Right ventricle myocardium inferior (tissue), 1 donor: ENCODE measurements at regions of chr5 and their contacts with region 1.

Region 1: DNA sequence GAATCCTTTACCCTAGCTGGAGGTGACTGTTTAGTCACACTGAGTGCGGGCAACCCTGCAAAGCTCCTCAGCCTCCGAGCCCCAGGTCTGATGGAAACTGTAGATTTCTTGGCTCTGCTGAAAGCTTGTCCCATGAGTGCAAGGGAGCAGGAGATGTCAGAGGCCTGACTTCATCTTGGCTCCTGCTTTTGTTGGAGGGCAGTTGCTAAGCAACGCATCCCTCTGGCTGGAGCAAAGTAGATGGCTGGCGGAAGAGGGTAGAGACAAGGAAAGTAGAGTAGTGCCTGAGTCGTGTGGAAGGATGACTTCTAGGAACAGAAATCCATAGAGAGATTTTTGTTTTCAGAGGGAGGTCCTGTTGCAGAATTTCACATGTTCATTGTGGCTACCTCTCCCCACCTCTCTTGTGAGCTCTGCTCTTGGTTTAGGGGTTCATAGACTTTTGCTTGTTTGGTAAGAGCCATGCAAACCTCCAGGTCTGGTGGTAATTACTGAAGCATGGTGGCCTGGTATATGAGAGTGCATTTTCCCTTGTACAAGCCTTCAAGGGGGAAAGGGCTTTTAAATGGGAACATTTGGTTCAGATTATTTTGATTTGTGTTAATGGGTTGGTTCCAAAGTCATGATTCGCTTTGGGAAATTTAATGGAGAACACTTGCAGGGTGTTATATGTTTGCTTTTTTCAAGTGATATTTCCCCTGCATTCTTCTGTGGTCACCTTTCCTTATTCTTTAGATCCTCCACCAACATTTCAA is 71.5 kb downstream of the ARHGAP26 start:
- DNase-seq: no peak
- ATAC-seq: peak; percentile 76

Region 2: DNA sequence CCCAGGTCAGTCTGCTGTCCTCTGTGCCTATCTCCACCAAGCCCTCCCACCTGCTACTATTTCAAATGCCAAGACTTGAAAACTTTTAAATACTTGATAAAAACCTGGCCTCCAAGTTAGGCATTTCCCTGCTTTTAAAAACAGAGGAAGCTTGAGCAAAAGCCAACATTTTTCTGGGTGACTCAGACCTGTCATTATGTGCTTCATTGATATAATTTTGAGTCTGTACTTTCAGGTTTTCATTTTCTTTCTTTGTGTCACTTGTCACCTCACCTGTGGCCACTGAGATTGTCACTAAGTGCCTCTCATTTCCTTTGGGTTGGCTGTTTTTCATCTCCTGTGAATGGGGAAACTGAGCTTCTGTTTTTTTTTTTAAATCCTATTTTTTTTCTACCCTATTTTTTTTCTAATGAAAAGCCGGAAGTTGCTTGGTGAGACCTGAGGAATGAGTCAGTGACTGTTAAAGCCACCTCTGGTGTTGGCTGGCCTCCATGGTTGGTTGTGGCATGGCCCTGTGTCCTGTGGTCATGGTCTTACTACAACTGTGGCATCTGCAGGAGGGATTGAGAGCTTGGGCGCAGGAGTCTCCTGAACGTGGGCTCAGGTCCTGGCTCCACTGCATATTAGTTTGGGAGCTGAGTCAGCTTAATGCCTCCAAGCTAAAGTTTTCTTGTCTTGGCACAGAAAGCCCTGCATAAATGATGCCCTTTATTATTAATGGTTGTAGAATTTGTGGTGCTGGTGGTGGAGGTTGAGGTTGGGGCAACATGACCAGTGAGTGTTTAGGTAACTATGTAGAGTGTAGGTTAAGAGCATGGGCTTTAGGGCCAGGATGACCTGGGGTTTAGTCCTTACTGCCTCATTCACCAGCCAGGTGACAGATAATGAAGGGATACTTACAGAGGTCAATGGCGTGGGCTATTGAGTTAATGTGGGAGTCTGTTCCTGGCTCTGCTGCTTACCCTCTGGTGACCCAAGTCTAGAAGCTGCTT is 14.7 kb before region 1 on chr5:
- intact Hi-C with region 1: no loop called
- DNase-seq: no peak
- ATAC-seq: no peak

Region 3: GRCh38 chr5:142864725-142865260 is 23.1 kb after region 1 on chr5:
- intact Hi-C with region 1: loop called (anchors 2 kb)
- DNase-seq: no peak
- ATAC-seq: peak; percentile 24

Region 4: DNA sequence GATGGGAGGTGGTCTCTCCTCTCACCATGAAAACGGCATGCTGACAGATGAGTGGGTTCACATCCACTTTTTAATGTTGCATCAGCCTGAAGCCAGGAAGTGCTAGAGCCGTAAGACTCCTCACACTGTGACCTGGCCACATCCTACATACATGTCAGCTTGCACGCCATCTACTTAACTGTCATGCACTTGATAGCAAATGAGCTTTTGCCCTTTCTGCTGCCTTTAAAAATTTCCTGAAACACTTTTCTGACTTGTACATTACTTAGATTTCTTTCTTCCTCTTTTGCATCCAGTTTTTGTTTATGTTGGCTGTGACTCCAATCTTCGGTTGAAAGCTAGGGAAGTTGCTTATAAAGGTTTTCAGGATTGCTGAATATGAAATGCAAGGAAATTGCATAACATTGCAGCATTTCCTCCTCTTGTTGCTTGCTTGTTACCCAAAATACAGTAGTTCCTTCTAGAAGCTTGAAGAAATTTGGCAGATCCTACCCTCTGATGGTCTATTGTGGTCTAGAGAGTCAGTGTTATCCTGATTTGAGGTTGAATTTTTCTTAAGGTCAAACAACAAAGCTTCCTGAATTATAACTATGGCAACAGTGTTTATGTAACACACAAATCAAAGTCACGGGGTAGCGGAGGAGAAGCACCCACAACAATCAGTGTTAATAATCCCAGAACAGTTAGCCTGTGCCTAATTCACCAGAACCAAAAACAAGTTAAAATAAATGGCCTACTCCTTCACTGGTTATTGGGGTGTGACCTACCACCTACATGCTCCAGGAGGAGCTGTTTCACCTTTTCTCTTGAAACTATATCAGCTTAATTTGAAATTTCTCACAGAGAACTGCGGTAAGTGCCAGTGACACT is 161.0 kb after region 1 on chr5:
- intact Hi-C with region 1: no loop called
- DNase-seq: no peak
- ATAC-seq: peak; percentile 74